GM12878 (cell line): ENCODE measurements at regions of chr10 and their contacts with region 1.

Region 1: DNA sequence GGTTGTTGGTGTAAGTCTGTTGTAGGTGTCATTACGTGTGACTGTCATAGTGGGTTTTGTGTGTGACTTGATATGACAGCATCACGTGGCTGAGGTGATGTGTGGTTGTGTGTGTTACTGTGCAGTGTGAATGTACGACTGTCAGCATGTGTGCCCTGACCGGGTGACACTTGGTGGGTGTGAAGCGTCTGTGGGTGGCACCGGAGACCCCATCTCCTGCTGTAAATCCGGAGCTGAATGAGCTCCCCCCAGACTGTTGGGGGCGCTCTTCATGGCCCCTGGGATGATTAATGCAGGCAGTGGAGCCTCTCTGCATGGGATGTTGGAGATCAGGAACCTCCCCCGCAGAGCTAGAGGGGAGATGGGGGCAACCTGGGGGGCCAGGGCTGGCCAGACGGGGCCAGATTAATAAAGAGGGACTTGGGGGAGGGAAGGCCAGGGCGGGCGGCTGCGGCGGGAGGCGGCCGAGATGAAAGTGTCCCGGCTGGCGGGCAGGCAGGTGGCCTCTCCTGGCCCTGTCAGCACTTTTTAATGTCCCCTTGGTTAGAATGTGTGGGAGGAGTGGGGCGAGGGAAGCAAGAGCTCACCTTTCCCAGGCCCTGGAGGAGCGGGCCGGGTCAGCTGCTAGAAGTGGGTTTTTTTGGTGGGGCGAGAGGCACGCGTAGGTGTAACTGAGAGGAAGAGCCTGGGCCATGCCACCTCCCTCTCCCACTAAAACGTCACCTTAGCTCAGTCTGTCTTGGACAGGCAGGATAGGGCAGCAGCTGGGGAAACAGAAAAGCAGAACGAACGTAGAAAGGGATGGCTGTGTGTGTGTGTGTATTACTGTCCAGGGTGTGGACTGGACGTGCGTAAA is 34.1 kb downstream of the HIF1AN start:
- DNase-seq: no peak
- ATAC-seq: peak; percentile 35
- H3K4me3 ChIP-seq: no peak overlapping the region
- H3K27ac ChIP-seq: no peak overlapping the region
- H3K4me1 ChIP-seq: no peaks in the 10 kb centered on the region
- H3K27me3 ChIP-seq: peaks cover 7% of the 10 kb centered on the region in 2 experiments; a peak in 2 of 4 replicates
- CTCF ChIP-seq: peak in 2 of 3 experiments; percentile 10 to 17; a peak in 1 of 6 replicates
- EP300 ChIP-seq: no peak
- POLR2A ChIP-seq: no peak
- RAD21 ChIP-seq: no peak

Region 2: GRCh38 chr10:100535715-100536353 is 34.0 kb before region 1 on chr10 and contains the start of gene HIF1AN:
- CTCF ChIA-PET with region 1: interaction called, 15 read pairs
- POLR2A ChIA-PET with region 1: no interaction called
- RAD21 ChIA-PET with region 1: no interaction called
- SMC1A ChIA-PET with region 1: interaction called, 3 read pairs
- in situ Hi-C with region 1: no loop called
- intact Hi-C with region 1: no loop called
- DNase-seq: peak; percentile 85
- ATAC-seq: peak; percentile 97
- H3K4me3 ChIP-seq: peak within 1 kb of the TSS; percentile 95
- H3K27ac ChIP-seq: peak within 1 kb of the TSS; percentile 45
- H3K4me1 ChIP-seq: peaks cover 11% of the 10 kb centered on the region
- H3K27me3 ChIP-seq: no peaks in the 10 kb centered on the region
- CTCF ChIP-seq: peak; percentile 94 to 98 (median 94)
- EP300 ChIP-seq: no peak
- POLR2A ChIP-seq: peak; percentile 95
- RAD21 ChIP-seq: no peak
- polyA plus RNA-seq, gene HIF1AN: 1.9 to 2.2 TPM